Dorsolateral prefrontal cortex (tissue), 120 donors: ENCODE measurements at regions of chr4 and their contacts with region 1.

Region 1: DNA sequence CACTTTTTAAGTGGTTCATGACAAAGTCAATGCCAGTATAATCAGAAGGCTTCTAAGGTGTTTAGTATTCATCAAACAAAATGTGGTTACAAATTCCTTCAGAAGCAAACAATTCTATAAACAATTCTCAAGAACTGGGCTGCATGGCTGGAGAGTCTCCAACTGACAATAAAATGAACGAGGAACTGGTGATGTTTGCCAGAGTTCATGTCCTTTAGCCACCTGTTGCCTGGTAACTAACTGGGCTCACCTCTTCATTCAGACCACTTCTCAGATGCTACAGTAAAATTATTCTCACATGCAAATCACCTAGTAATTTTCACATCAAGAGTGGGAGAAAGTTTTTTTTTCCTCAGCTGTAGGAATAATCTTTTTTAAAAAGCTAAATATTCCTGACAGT is 53.3 kb downstream of the CAMK2D start:
- DNase-seq: no peak
- H3K4me3 ChIP-seq: no peak overlapping the region
- H3K27ac ChIP-seq: no peak overlapping the region
- H3K27me3 ChIP-seq: no peaks in the 10 kb centered on the region
- CTCF ChIP-seq: no peak

Region 2: GRCh38 chr4:115287426-115287825 is 1579.2 kb after region 1 on chr4:
- intact Hi-C with region 1: loop called in 1 of 2 experiments (anchors 5 kb)
- DNase-seq: no peak
- H3K4me3 ChIP-seq: no peak overlapping the region
- H3K27ac ChIP-seq: no peak overlapping the region
- H3K27me3 ChIP-seq: peaks cover 0 to 3% (median 0%) of the 10 kb centered on the region in 45 donors
- CTCF ChIP-seq: no peak